Heart left ventricle (tissue), 16 donors: ENCODE measurements at regions of chr2 and their contacts with region 1.

Region 1: DNA sequence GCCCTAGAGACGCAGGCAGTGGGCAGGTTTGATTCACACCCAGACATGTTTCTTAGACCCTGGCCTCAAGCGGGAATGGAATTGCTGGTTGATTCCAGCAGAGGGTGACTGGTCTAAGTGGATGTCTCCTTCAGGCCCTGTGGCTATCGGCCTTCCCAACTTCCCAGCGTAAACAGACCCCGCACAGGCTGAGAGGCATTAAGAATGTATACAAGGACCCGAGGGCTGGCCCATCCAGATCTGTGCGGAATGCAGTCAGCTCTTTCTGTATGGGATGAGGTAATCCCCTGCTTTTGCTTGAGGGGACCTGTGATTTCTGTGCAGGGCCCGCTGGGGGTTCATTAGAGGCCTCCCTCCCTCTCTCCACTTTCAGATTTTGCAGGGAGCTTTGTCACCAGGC is 6.5 kb downstream of the ACKR3 start:
- DNase-seq: no peak
- ATAC-seq: peak in 2 of 4 donors; percentile 2 to 24
- H3K4me3 ChIP-seq: no peak overlapping the region
- H3K27ac ChIP-seq: peak overlapping the region in 9 of 12 donors; percentile 18 to 91 (median 70)
- H3K4me1 ChIP-seq: peaks cover 0 to 79% (median 55%) of the 10 kb centered on the region in 12 donors
- H3K27me3 ChIP-seq: no peaks in the 10 kb centered on the region
- CTCF ChIP-seq: peak in 2 of 12 donors; percentile 21 to 25
- POLR2A ChIP-seq: no peak

Region 2: DNA sequence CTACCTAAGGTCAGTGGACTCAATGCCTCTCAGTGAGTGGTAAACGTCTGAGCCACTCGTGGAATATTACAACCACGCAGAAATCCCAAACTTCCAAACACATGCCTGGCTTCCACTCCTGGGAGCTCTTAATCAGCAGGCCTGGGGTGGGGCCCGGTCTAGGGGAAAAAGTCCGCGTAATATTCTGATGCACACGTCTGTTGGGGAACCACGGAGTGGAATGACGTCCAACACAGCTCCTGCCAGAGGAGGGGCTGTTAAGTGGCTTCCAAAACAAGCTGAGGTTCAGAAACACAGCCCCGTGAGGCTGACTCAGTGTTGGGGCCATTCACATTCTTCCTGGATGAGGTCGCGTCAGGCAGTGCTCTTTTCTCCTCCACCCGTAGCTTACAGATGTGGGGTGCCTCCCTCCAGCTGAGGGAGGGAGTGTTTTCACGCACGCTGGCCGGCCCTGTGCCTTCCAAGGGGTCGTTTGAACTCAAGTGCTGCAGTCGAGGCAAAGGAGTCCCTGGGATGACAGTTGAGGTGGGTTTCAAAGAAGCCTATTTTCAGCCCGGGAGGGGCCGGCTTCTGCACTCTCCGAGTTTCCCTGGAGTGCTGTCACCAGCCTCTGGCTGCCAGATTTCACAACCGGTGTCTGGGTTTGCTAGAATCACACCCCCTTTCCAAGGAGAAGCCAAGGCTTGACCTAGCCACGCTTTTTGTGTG is 66.7 kb after region 1 on chr2:
- intact Hi-C with region 1: loop called in 1 of 10 experiments (anchors 5 kb)
- DNase-seq: peak; percentile 82 to 94 (median 83)
- ATAC-seq: peak; percentile 78 to 96 (median 94)
- H3K4me3 ChIP-seq: no peak overlapping the region
- H3K27ac ChIP-seq: peak overlapping the region; percentile 11 to 86 (median 72)
- H3K4me1 ChIP-seq: peaks cover 0 to 25% (median 7%) of the 10 kb centered on the region in 12 donors
- H3K27me3 ChIP-seq: no peaks in the 10 kb centered on the region
- CTCF ChIP-seq: peak in 1 of 12 donors; percentile 7
- POLR2A ChIP-seq: no peak

Region 3: GRCh38 chr2:236663287-236664101 is 87.4 kb after region 1 on chr2:
- intact Hi-C with region 1: loop called in 2 of 10 experiments (anchors 10 kb)
- DNase-seq: peak; percentile 68 to 86 (median 79)
- ATAC-seq: peak; percentile 35 to 66 (median 56)
- H3K4me3 ChIP-seq: no peak overlapping the region
- H3K27ac ChIP-seq: peak overlapping the region in 10 of 12 donors; percentile 9 to 71 (median 62)
- H3K4me1 ChIP-seq: peaks cover 0 to 47% (median 37%) of the 10 kb centered on the region in 12 donors
- H3K27me3 ChIP-seq: peaks cover 0 to 3% (median 0%) of the 10 kb centered on the region in 9 donors
- CTCF ChIP-seq: no peak
- POLR2A ChIP-seq: no peak

Region 4: GRCh38 chr2:236679884-236680860 is 104.1 kb after region 1 on chr2:
- intact Hi-C with region 1: loop called in 2 of 10 experiments (anchors 10 kb)
- DNase-seq: peak in 1 of 5 donors; percentile 1
- ATAC-seq: no peak
- H3K4me3 ChIP-seq: no peak overlapping the region
- H3K27ac ChIP-seq: no peak overlapping the region
- H3K4me1 ChIP-seq: peaks cover 0 to 34% (median 15%) of the 10 kb centered on the region in 12 donors
- H3K27me3 ChIP-seq: no peaks in the 10 kb centered on the region
- CTCF ChIP-seq: no peak
- POLR2A ChIP-seq: no peak

Region 5: GRCh38 chr2:236731878-236732580 is 155.9 kb after region 1 on chr2:
- intact Hi-C with region 1: loop called in 3 of 10 experiments (anchors 5 to 10 kb)
- DNase-seq: peak in 4 of 5 donors; percentile 82 to 88 (median 85)
- ATAC-seq: peak; percentile 95 to 96 (median 95)
- H3K4me3 ChIP-seq: no peak overlapping the region
- H3K27ac ChIP-seq: peak overlapping the region; percentile 50 to 84 (median 78)
- H3K4me1 ChIP-seq: peaks cover 3 to 32% (median 19%) of the 10 kb centered on the region in 12 donors
- H3K27me3 ChIP-seq: no peaks in the 10 kb centered on the region
- CTCF ChIP-seq: no peak
- POLR2A ChIP-seq: no peak

Region 6: DNA sequence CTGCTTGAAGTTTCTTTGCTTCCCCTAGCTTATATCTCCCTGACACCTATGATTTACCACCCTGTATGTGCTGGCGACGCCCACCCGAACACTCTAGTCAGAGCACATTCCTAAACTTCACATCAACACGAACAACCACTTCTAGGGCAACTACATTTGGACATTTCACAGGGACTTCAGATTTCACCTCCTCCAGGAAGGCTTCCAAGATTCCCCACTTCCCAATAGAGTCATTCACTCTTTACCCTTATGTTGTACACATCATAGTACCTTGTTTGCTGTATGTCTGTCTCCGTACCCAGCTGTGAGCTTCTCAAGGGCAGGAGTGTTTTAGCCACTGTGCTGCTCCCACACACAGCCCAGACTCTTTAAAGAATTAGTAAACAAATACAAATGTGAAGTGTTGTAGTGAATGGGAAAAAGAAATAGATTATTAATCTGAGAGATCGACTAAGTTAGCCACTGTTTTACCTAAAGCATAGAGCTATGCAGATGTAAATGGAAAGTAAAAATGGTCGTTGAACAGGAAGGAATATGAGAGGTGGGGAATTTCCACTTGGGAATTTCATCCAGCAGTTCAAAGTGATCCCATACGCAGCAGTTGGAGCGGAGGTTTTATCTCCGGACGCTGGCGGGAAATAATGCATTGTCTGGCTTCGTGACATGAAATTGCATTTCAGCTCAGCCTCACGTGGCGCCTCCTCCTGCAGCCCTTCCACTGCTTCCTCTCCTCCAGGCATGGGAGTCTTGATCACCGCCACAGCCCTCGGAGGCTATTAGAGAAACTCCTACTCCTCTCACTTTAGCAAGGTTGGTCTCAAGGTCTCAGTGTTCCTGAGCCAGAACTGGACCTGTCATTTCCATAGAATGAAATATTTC is 276.3 kb after region 1 on chr2:
- intact Hi-C with region 1: loop called in 1 of 10 experiments (anchors 10 kb)
- DNase-seq: peak in 2 of 5 donors; percentile 34 to 50
- ATAC-seq: peak in 1 of 4 donors; percentile 75
- H3K4me3 ChIP-seq: no peak overlapping the region
- H3K27ac ChIP-seq: peak overlapping the region in 2 of 12 donors; percentile 9 to 52
- H3K4me1 ChIP-seq: peaks cover 0 to 21% (median 3%) of the 10 kb centered on the region in 12 donors
- H3K27me3 ChIP-seq: no peaks in the 10 kb centered on the region
- CTCF ChIP-seq: no peak
- POLR2A ChIP-seq: no peak

Region 7: GRCh38 chr2:237026981-237027711 is 451.1 kb after region 1 on chr2:
- intact Hi-C with region 1: loop called in 2 of 10 experiments (anchors 5 to 10 kb)
- DNase-seq: peak; percentile 62 to 82 (median 65)
- ATAC-seq: peak; percentile 87 to 92 (median 92)
- H3K4me3 ChIP-seq: no peak overlapping the region
- H3K27ac ChIP-seq: no peak overlapping the region
- H3K4me1 ChIP-seq: peaks cover 0 to 9% (median 0%) of the 10 kb centered on the region in 12 donors
- H3K27me3 ChIP-seq: no peaks in the 10 kb centered on the region
- CTCF ChIP-seq: peak; percentile 62 to 94 (median 86)
- POLR2A ChIP-seq: no peak